Mammary epithelial cell (primary cell): ENCODE measurements at regions of chr12 and their contacts with region 1.

Region 1: GRCh38 chr12:11885261-11886038 is 185.3 kb upstream of the BCL2L14 start:
- DNase-seq: peak; percentile 96
- H3K4me3 ChIP-seq: no peak overlapping the region
- H3K27ac ChIP-seq: peak overlapping the region; percentile 89
- H3K4me1 ChIP-seq: peaks cover 34% of the 10 kb centered on the region
- H3K27me3 ChIP-seq: no peaks in the 10 kb centered on the region
- CTCF ChIP-seq: no peak

Region 2: GRCh38 chr12:11252098-11252497 is 633.4 kb before region 1 on chr12:
- CTCF ChIA-PET with region 1: no interaction called
- dilution Hi-C with region 1: no loop called
- in situ Hi-C with region 1: no loop called
- intact Hi-C with region 1: no loop called
- DNase-seq: no peak
- H3K4me3 ChIP-seq: no peak overlapping the region
- H3K27ac ChIP-seq: no peak overlapping the region
- H3K4me1 ChIP-seq: no peaks in the 10 kb centered on the region
- H3K27me3 ChIP-seq: no peaks in the 10 kb centered on the region
- CTCF ChIP-seq: no peak

Region 3: GRCh38 chr12:11855983-11856374 is 29.5 kb before region 1 on chr12:
- CTCF ChIA-PET with region 1: no interaction called
- dilution Hi-C with region 1: no loop called
- in situ Hi-C with region 1: no loop called
- intact Hi-C with region 1: loop called (anchors 2 kb)
- DNase-seq: no peak
- H3K4me3 ChIP-seq: no peak overlapping the region
- H3K27ac ChIP-seq: no peak overlapping the region
- H3K4me1 ChIP-seq: peaks cover 29% of the 10 kb centered on the region
- H3K27me3 ChIP-seq: no peaks in the 10 kb centered on the region
- CTCF ChIP-seq: no peak

Region 4: GRCh38 chr12:11941606-11942337 is 56.3 kb after region 1 on chr12:
- CTCF ChIA-PET with region 1: no interaction called
- dilution Hi-C with region 1: no loop called
- in situ Hi-C with region 1: no loop called
- intact Hi-C with region 1: loop called (anchors 2 kb)
- DNase-seq: peak; percentile 89
- H3K4me3 ChIP-seq: no peak overlapping the region
- H3K27ac ChIP-seq: peak overlapping the region; percentile 84
- H3K4me1 ChIP-seq: peaks cover 14% of the 10 kb centered on the region
- H3K27me3 ChIP-seq: no peaks in the 10 kb centered on the region
- CTCF ChIP-seq: no peak

Region 5: GRCh38 chr12:12010277-12011039 is 125.0 kb after region 1 on chr12:
- CTCF ChIA-PET with region 1: no interaction called
- dilution Hi-C with region 1: no loop called
- in situ Hi-C with region 1: no loop called
- intact Hi-C with region 1: loop called (anchors 5 kb)
- DNase-seq: peak; percentile 88
- H3K4me3 ChIP-seq: no peak overlapping the region
- H3K27ac ChIP-seq: peak overlapping the region; percentile 47
- H3K4me1 ChIP-seq: peaks cover 26% of the 10 kb centered on the region
- H3K27me3 ChIP-seq: no peaks in the 10 kb centered on the region
- CTCF ChIP-seq: no peak